Common myeloid progenitor, CD34-positive (primary cell): ENCODE measurements at regions of chr10 and their contacts with region 1.

Region 1: DNA sequence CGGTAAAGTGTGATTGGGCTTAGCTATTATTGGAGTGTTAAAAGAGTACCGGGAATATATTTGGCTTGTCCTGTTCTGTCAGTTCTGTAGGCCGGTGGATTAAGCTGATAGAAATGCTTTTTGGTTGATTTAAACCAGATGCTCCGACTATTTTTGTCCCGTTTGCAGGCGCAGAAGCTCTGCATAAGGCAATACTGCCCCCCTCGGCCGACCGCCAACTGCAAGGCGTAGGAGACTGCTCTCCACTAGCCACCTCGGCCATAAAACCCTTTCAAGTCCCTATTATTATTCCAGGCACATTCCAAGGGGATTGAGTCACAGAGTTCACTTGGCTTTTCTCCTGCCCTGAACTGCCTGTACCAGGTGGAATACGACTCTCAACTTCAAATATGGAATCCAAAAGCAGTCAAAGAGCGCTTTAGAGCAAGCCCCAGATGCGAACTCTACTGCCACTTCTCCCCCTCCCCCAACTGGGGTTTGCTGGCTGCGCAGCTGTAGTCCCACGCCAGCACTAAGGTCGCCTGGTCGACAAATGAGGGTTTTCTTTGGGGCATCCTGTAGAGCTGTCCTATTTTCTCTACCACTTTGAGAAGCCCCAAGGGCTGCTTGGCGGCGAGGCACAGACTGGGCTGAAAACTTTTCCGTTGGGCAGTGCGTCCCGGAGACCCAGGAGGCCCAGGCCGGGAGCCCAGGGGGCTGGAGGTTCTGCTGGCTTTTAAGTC is 108.3 kb downstream of the REEP3 start:
- DNase-seq: peak; percentile 80 to 91 (median 89)
- H3K4me3 ChIP-seq: peak overlapping the region; percentile 62 to 92 (median 78)
- H3K27ac ChIP-seq: peak overlapping the region in 1 of 2 experiments; percentile 67
- H3K4me1 ChIP-seq: peaks cover 12 to 46% (median 33%) of the 10 kb centered on the region in 4 experiments
- H3K27me3 ChIP-seq: peaks cover 0 to 6% (median 4%) of the 10 kb centered on the region in 5 experiments

Region 2: DNA sequence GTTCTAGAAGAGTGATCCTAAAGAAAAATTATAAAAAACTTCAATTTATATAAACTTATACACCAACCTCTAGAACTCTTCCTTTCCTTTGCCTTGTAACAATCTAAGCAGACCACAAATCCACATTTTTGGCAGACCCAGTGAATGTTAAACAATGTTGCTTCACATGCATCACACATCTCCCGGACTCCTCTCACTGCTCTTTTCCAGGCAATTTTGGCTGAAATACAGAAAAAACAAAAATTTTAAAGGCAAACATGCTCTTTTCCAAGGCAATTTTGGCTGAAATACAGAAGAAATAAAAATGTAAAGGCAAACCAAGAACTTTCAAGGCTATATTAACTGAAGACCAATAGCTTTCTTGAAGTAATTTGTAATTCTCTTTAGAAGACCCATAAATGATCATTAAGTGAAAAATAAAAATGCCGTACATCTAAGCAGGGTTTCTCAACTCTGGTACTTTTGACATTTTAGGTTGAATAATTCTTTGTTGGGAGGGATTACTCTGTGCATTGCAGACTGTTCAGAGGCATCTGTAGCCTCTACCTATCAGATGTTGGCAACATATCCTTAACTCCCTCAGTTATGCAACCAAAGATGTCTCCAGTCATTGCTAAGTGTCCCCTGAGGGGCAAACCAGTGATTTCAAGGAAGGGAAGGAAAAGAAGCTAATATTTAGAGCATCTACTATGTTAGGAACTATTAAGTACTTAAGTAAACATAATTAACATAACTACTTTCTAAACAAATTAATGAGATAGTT is 432.0 kb before region 1 on chr10:
- CTCF ChIA-PET with region 1: interaction called, 15 read pairs
- POLR2A ChIA-PET with region 1: no interaction called
- DNase-seq: no peak
- H3K4me3 ChIP-seq: no peak overlapping the region
- H3K27ac ChIP-seq: no peak overlapping the region
- H3K4me1 ChIP-seq: no peaks in the 10 kb centered on the region
- H3K27me3 ChIP-seq: no peaks in the 10 kb centered on the region

Region 3: GRCh38 chr10:63227207-63227915 is 402.2 kb before region 1 on chr10:
- CTCF ChIA-PET with region 1: interaction called, 21 read pairs
- POLR2A ChIA-PET with region 1: no interaction called
- DNase-seq: peak in 2 of 3 donors; percentile 19 to 33
- H3K4me3 ChIP-seq: peak overlapping the region in 1 of 7 experiments; percentile 23
- H3K27ac ChIP-seq: peak overlapping the region in 1 of 2 experiments; percentile 51
- H3K4me1 ChIP-seq: peaks cover 4 to 26% (median 12%) of the 10 kb centered on the region in 4 experiments
- H3K27me3 ChIP-seq: no peaks in the 10 kb centered on the region

Region 4: GRCh38 chr10:63504125-63504880 is 125.2 kb before region 1 on chr10:
- CTCF ChIA-PET with region 1: interaction called, 12 read pairs
- POLR2A ChIA-PET with region 1: no interaction called
- DNase-seq: no peak
- H3K4me3 ChIP-seq: no peak overlapping the region
- H3K27ac ChIP-seq: no peak overlapping the region
- H3K4me1 ChIP-seq: peaks cover 0 to 6% (median 2%) of the 10 kb centered on the region in 4 experiments
- H3K27me3 ChIP-seq: no peaks in the 10 kb centered on the region

Region 5: DNA sequence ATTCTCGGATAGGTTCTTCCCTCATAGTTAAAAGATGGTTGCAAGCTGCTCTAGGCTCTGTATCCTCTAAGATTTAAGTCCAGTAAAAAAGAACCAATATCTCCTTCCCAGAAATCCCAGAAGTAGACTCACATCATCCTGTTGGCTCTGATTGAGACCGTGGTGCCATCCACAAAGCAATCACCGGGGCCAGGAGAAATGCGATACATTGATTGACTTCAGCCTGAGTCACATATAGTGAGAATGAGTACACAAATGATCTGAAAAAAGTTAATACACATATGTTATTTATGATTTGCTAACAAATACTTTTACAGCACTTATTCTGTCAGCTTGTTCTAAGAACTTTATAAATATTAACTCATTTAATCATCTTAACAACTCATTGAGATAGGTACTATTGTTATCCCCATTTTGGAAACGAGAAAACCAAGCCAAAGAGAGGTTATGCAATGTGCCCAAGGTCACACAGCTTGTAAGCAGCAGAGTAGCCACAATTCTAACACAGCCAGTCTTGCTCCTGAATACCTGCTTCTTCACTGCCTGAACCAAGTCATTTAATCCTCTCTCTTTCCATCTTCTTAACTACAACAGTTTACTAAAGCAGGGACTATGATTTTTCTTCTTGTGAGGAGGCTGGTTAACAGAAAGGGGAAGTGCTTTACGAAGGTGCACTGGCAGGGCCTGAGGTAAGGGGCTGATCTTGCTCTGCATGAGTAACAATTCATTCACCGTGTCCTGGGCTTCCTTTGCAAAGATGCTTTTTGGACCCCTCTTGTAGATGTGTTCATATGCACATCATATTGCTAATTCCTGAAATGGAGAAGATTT is 68.6 kb after region 1 on chr10:
- CTCF ChIA-PET with region 1: no interaction called
- POLR2A ChIA-PET with region 1: no interaction called
- DNase-seq: peak in 2 of 3 donors; percentile 63 to 70
- H3K4me3 ChIP-seq: no peak overlapping the region
- H3K27ac ChIP-seq: no peak overlapping the region
- H3K4me1 ChIP-seq: peaks cover 0 to 8% (median 2%) of the 10 kb centered on the region in 4 experiments
- H3K27me3 ChIP-seq: no peaks in the 10 kb centered on the region

Region 6: GRCh38 chr10:63836666-63837442 is 207.3 kb after region 1 on chr10:
- CTCF ChIA-PET with region 1: no interaction called
- POLR2A ChIA-PET with region 1: no interaction called
- DNase-seq: peak in 1 of 3 donors; percentile 2
- H3K4me3 ChIP-seq: no peak overlapping the region
- H3K27ac ChIP-seq: no peak overlapping the region
- H3K4me1 ChIP-seq: no peaks in the 10 kb centered on the region
- H3K27me3 ChIP-seq: peaks cover 0 to 4% (median 2%) of the 10 kb centered on the region in 5 experiments